OCI-LY7 (cell line): ENCODE measurements at regions of chr17 and their contacts with region 1.

Region 1: DNA sequence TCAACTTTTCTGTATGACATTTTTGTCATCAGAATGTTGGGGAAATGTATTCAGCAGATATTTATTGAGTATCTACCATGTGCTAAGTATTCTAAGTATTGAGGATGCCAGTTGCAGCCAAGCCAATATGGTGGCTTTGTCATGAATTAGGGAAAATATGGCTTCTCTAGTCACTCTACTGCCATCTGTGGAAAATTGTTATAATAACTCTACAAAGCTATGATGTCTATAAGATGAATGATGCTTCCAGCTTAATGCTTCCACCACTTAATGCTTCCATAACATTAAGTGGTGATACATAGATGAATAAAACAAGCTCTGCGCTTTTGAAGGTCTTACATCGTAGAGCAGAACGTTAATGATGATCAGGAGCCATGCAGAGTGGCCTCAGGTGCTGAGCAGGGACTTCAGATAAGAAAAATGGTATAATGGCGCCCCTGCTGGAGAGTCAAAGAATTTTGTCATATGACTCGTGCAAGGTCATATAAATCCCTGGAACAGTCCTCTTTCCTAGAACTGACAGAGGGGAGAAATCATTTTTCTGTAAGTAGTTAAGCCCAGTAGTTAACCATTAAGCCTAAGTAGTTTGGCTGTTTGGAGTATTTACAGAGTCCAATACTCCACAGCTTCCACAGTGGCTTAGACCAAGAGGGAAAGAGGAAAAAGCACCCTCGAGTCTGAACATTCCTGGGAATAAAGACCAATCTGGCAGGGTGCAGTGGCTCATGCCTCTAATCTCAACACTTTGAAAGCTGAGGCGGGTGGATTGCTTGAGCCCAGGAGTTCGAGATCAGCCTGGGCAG is 2.7 kb upstream of the TMIGD1 start:
- DNase-seq: peak; percentile 80
- H3K4me3 ChIP-seq: no peak overlapping the region
- H3K27ac ChIP-seq: no peak overlapping the region
- H3K4me1 ChIP-seq: peaks cover 10% of the 10 kb centered on the region
- CTCF ChIP-seq: peak; percentile 100

Region 2: GRCh38 chr17:30104575-30105339 is 231.8 kb before region 1 on chr17:
- CTCF ChIA-PET with region 1: interaction called, 10 read pairs
- POLR2A ChIA-PET with region 1: interaction called, 8 read pairs
- intact Hi-C with region 1: loop called (anchors 1 kb)
- DNase-seq: peak; percentile 86
- H3K4me3 ChIP-seq: peak overlapping the region; percentile 57
- H3K27ac ChIP-seq: no peak overlapping the region
- H3K4me1 ChIP-seq: no peaks in the 10 kb centered on the region
- CTCF ChIP-seq: peak; percentile 99

Region 3: GRCh38 chr17:30116661-30117551 is 219.7 kb before region 1 on chr17 and contains the start of gene NSRP1:
- CTCF ChIA-PET with region 1: no interaction called
- POLR2A ChIA-PET with region 1: no interaction called
- intact Hi-C with region 1: loop called (anchors 2 kb)
- DNase-seq: peak; percentile 95
- H3K4me3 ChIP-seq: peak within 1 kb of the TSS; percentile 88
- H3K27ac ChIP-seq: peak within 1 kb of the TSS; percentile 75
- H3K4me1 ChIP-seq: peaks cover 26% of the 10 kb centered on the region
- CTCF ChIP-seq: no peak
- total RNA-seq, gene NSRP1: 18.6 and 26.1 TPM in 2 replicates

Region 4: DNA sequence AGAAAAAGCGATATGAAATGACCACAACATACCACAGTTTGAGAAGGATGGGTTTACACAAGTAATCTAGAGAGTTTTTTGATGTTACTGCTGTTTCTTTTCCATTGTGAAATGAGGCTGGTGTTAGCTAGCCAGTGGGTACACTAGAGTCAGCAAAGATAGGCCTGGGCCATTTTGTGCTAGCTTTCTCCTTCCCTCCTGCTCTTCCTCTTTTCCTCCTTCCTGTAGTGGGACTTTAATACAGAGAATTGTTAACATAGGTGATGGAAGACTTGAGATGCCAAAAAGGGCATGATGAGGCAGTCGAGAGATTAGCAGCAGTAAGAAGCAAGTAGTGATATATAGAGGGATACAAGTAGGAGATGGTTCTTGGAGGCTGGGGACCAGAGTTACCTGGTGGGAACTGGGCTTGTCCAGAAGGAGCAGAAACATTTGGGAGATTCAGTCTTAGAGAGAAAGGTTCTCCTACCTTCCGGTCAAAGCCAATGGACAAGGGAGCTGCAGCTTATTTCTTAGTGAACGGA is 212.2 kb before region 1 on chr17:
- CTCF ChIA-PET with region 1: interaction called, 5 read pairs
- POLR2A ChIA-PET with region 1: no interaction called
- intact Hi-C with region 1: loop called (anchors 1 kb)
- DNase-seq: no peak
- H3K4me3 ChIP-seq: no peak overlapping the region
- H3K27ac ChIP-seq: no peak overlapping the region
- H3K4me1 ChIP-seq: peaks cover 19% of the 10 kb centered on the region
- CTCF ChIP-seq: no peak

Region 5: GRCh38 chr17:30299000-30299399 is 37.6 kb before region 1 on chr17:
- CTCF ChIA-PET with region 1: no interaction called
- POLR2A ChIA-PET with region 1: interaction called, 3 read pairs
- intact Hi-C with region 1: loop called (anchors 2 kb)
- DNase-seq: peak; percentile 11
- H3K4me3 ChIP-seq: no peak overlapping the region
- H3K27ac ChIP-seq: no peak overlapping the region
- H3K4me1 ChIP-seq: peaks cover 17% of the 10 kb centered on the region
- CTCF ChIP-seq: peak; percentile 74

Region 6: DNA sequence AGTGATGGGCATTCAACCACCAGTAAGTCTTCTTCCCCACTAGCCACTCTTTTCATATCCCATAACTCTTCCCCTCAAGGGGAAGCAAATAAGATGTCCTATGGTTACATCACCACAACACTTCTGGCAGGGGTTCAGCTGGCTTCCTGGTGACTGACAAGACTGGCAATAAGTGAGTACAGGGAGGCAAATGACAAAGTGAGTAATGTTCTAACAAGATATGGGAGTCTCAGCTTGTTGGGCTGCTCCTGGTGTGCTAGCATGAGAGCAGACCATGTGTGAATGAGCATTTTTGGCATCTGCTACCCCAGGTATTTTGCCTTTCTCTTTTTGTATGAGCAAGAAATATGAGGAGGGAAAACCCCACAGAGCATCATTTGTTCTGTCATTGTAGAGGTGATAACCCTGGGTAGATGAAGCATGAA is 12.7 kb before region 1 on chr17:
- CTCF ChIA-PET with region 1: interaction called, 4 read pairs
- POLR2A ChIA-PET with region 1: interaction called, 11 read pairs
- intact Hi-C with region 1: no loop called
- DNase-seq: peak; percentile 55
- H3K4me3 ChIP-seq: peak overlapping the region; percentile 63
- H3K27ac ChIP-seq: peak overlapping the region; percentile 96
- H3K4me1 ChIP-seq: peaks cover 64% of the 10 kb centered on the region
- CTCF ChIP-seq: no peak